Colonic mucosa (tissue), 4 donors: ENCODE measurements at regions of chr9 and their contacts with region 1.

Region 1: GRCh38 chr9:35891646-35892045 is 14.4 kb upstream of the HRCT1 start:
- DNase-seq: no peak
- H3K4me3 ChIP-seq: no peak overlapping the region
- H3K27ac ChIP-seq: no peak overlapping the region
- H3K4me1 ChIP-seq: no peaks in the 10 kb centered on the region
- H3K27me3 ChIP-seq: no peaks in the 10 kb centered on the region
- CTCF ChIP-seq: no peak

Region 2: GRCh38 chr9:35790385-35791296 is 101.0 kb before region 1 on chr9:
- intact Hi-C with region 1: loop called (anchors 5 kb)
- DNase-seq: peak; percentile 76
- H3K4me3 ChIP-seq: no peak overlapping the region
- H3K27ac ChIP-seq: no peak overlapping the region
- H3K4me1 ChIP-seq: no peaks in the 10 kb centered on the region
- H3K27me3 ChIP-seq: no peaks in the 10 kb centered on the region
- CTCF ChIP-seq: peak; percentile 72

Region 3: GRCh38 chr9:36023260-36024048 is 131.8 kb after region 1 on chr9:
- intact Hi-C with region 1: loop called (anchors 5 kb)
- DNase-seq: peak; percentile 81
- H3K4me3 ChIP-seq: no peak overlapping the region
- H3K27ac ChIP-seq: no peak overlapping the region
- H3K4me1 ChIP-seq: no peaks in the 10 kb centered on the region
- H3K27me3 ChIP-seq: no peaks in the 10 kb centered on the region
- CTCF ChIP-seq: peak; percentile 69